ENCODE measurements at regions of chr12 and their contacts with region 1.

Region 1: DNA sequence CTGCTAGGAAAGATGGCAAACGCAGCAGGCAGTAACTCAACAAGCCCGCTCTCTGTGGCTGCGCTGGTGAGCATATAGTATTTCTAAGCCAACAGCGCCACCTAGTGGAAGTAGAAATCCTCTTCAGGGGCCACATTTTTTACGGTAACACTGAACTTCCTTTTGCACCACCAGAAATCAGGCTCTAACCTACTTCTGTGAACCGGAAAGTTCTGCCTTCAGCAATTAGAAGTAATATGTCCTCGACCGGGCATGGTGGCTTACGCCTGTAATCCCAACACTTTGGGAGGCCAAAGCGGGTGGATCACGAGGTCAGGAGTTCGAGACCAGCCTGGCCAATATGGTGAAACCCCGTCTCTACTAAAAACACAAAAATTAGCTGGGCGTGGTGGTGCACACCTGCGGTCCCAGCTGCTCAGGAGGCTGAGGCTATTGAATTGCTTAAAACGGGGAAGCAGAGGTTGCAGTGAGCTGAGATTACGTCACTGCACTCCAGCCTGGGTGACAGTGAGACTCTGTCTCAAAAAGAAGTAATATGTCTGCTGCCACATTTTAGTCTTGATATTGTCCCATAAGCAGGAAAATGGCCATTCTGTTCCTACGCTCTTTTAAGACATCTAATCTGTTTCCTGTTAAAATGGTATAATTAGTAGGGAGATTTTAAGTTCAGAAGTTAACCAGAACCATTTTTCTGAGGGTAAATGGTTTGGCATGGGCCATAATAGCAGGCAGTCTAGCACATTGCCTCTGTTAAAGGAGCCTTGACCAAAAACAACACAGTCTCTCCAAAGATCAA is 26.8 kb downstream of the APOBEC1 start:
- DNase-seq: peak; percentile 89
- H3K4me3 Mint-ChIP-seq: peak overlapping the region; percentile 65
- H3K27ac Mint-ChIP-seq: peak overlapping the region; percentile 69
- H3K4me1 Mint-ChIP-seq: peaks cover 20% of the 10 kb centered on the region
- H3K27me3 Mint-ChIP-seq: peaks cover 2% of the 10 kb centered on the region

Region 2: GRCh38 chr12:7219599-7220243 is 419.2 kb before region 1 on chr12:
- CTCF ChIA-PET with region 1: interaction called, 13 read pairs
- intact Hi-C with region 1: loop called (anchors 1 kb)
- DNase-seq: peak; percentile 87
- H3K4me3 Mint-ChIP-seq: no peak overlapping the region
- H3K27ac Mint-ChIP-seq: no peak overlapping the region
- H3K4me1 Mint-ChIP-seq: no peaks in the 10 kb centered on the region
- H3K27me3 Mint-ChIP-seq: no peaks in the 10 kb centered on the region

Region 3: DNA sequence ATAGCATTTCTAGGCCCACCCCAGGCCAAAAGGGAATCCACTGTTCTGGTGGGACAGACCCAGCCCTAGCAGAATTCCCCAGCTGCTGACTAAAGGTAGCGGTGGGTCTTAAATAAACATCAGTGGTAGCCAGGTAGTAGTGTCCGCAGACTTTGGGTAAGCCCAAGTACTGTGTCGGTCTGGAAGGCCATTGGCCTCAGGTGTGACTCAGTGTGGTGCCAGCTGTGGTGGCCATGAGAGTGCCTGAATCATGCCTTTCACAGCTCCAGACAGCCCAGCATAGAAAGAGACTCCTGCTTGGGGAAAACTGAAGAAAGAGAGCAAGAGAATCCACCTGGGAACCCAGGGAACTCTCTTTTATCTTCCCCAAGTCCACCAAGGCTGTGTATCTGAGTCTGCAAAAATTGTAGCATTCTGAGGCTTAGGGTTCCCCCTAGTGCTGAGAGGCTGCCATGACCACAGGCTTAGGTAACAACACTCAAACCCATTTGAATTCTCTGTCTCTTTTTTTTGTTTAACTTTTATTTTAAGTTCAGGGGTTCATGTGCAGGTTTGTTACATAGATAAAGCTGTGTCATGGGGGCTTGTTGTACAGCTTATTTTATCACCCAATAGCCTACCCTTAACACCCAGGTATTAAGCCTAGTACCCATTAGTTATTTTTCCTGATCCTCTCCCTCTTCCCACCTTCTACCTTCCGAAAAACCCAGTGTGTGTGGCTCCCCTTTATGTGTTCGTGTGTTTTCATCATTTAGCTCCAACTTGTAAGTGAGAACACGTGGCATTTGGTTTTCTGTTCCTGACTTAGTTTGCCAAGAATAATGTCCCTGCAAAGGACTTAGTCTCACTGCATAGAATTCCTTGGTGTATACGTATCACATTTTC is 178.3 kb before region 1 on chr12:
- CTCF ChIA-PET with region 1: interaction called, 8 read pairs
- intact Hi-C with region 1: loop called (anchors 1 kb)
- DNase-seq: peak; percentile 75
- H3K4me3 Mint-ChIP-seq: no peak overlapping the region
- H3K27ac Mint-ChIP-seq: no peak overlapping the region
- H3K4me1 Mint-ChIP-seq: no peaks in the 10 kb centered on the region
- H3K27me3 Mint-ChIP-seq: peaks cover 5% of the 10 kb centered on the region

Region 4: DNA sequence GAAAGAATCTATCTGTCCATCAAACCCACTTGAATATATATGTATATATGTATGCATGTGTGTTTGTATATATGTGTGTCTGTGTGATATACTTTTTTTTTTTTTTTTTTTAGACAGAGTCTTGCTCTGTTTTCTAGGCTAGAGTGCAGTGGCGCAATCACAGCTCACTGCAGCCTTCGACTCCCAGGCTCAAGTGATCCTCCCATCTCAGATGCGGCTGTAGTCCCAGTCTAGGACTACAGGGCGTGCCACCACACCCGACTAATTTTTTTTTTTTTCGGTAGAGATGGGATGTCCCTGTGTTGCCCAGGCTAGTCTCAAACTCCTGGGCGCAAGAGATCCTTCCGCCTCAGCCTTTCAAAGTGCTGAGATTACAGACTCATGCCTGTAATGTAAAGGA is 39.8 kb after region 1 on chr12:
- CTCF ChIA-PET with region 1: interaction called, 4 read pairs
- intact Hi-C with region 1: loop called (anchors 2 kb)
- DNase-seq: no peak
- H3K4me3 Mint-ChIP-seq: no peak overlapping the region
- H3K27ac Mint-ChIP-seq: no peak overlapping the region
- H3K4me1 Mint-ChIP-seq: peaks cover 5% of the 10 kb centered on the region
- H3K27me3 Mint-ChIP-seq: no peaks in the 10 kb centered on the region

Region 5: DNA sequence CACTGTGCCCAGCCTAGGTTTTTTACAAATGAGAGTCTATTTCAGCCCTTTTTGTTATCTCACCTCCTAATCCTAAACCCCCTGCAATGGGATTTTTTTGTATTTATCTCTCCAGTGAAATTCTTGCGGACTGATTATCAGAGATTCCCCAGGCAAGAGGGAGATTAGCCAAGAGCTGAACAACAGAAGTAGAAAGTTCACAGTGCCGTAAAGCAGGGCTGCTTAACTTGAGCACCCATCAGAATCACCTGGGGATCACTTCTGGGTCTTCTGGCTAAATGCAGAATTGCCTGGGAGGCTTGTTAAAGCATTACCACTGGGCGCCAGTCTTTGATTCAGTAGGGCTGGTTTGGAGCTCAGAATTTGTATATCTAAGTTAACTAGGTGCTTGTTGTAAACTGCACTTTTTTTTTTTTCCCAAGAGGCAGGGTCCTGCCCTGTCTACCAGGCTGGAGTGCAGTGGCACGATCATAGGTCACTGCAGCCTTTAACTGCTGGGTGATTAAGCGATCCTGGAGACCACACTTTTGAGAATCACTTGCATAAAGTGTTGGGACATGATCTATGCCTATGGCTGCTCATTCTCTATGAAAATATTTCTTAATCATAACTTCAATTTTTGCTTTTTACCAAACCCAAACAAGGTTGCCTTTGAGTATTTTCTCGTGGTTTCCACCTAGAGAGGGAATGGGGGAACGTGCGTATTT is 71.2 kb after region 1 on chr12:
- CTCF ChIA-PET with region 1: no interaction called
- intact Hi-C with region 1: no loop called
- DNase-seq: no peak
- H3K4me3 Mint-ChIP-seq: no peak overlapping the region
- H3K27ac Mint-ChIP-seq: no peak overlapping the region
- H3K4me1 Mint-ChIP-seq: no peaks in the 10 kb centered on the region
- H3K27me3 Mint-ChIP-seq: no peaks in the 10 kb centered on the region

Region 6: DNA sequence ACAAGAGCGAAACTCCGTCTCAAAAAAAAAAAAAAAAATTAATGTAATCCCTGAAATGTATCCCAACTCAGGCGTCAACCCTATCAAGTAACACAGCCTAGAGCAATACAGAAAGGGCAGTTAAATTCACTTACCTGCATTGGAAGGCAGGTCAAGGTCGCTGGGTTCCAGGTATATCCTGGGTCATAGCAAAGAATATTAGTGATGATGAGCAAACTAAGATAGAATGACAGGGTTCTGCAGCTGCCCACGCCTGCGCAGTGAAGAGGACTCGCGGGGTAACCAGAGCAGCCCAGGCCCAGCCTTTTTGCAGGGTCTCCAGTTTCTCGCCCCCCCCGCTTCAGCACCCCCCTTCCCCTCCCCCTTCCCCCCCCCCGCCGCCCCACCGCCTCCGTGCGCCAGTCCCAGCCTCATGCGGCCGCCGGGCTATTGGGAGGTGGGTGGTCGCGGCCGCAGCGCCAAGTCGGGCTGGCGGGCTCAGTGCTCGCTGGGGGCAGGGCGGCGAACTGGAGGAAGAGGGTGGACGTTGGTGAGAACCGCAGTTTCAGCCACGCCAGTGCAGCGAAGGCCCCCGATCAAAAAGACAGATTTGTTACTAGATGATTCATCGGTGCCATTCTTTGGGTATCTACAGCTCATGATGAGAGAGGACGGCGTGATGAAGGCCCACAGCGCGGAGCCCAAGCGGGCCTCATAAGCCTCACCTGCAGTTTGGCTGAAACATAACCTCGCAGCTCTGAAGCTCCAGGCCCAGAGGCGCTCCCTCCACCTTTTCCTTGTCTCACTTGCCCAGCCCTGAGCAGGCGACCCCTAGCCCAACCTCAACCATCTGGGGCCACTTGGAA is 276.8 kb after region 1 on chr12:
- CTCF ChIA-PET with region 1: no interaction called
- intact Hi-C with region 1: no loop called
- DNase-seq: no peak
- H3K4me3 Mint-ChIP-seq: no peak overlapping the region
- H3K27ac Mint-ChIP-seq: no peak overlapping the region
- H3K4me1 Mint-ChIP-seq: peaks cover 12% of the 10 kb centered on the region
- H3K27me3 Mint-ChIP-seq: no peaks in the 10 kb centered on the region

Measured in activated naive CD4-positive, alpha-beta T cell treated with anti-CD3 and anti-CD28 coated beads for 36 hours (primary cell).